ENCODE measurements at regions of chr19 and their contacts with region 1.

Region 1: DNA sequence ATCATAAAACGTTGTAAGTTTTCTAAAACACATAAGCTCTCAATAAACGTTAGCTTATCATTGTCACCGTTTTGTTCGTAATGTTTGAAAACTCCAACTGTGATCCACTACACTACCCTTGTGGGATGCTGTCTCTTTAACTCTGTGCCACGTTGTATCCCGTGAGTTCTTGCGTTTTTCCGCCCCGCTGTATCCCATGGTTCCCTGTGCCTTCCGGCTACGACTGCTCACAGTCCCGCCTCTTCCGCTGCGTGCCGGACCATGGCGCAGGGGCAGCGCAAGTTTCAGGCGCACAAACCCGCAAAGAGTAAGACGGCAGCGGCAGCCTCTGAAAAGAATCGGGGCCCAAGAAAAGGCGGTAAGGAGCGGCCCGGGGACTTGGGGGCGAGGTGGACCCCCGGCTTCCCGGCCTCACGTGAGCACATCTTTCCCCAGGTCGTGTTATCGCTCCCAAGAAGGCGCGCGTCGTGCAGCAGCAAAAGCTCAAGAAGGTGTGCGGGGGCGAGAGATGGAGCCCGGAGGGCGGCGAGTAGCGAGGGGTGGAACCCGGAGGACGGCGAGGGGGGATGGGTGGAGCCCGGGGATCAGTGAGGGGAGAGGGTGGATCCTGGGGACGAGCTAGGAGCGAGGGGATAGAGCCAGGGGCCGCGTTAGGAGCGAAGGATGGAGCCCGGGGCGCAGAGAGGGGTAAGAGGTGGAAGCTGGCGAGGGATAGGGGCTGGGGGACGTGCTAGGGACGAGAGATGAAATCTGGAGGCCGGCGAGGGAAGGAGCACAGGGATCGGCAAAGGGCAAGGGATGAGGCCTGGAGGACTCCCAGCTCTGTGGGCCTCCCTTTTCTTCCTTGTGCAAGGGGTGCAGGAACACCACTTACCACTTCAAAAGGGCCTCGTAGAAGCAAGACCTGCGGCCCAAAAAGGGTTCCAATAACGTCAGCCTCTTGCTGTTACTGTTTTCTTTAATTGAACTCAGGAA is at the start of gene C19orf53:
- DNase-seq: peak; percentile 90
- H3K4me3 ChIP-seq: peak within 1 kb of the TSS; percentile 55 to 91
- H3K27ac ChIP-seq: peak within 1 kb of the TSS; percentile 71 to 84
- H3K4me1 ChIP-seq: peaks cover 9% of the 10 kb centered on the region
- H3K27me3 ChIP-seq: no peaks in the 10 kb centered on the region
- CTCF ChIP-seq: peak in 1 of 4 experiments; percentile 29
- POLR2A ChIP-seq: peak; percentile 90
- total RNA-seq, gene C19orf53: 151 to 193 TPM

Region 2: GRCh38 chr19:13717194-13717643 is 57.3 kb before region 1 on chr19:
- intact Hi-C with region 1: no loop called
- DNase-seq: no peak
- H3K4me3 ChIP-seq: no peak overlapping the region
- H3K27ac ChIP-seq: no peak overlapping the region
- H3K4me1 ChIP-seq: no peaks in the 10 kb centered on the region
- H3K27me3 ChIP-seq: no peaks in the 10 kb centered on the region
- CTCF ChIP-seq: no peak
- POLR2A ChIP-seq: no peak

Region 3: DNA sequence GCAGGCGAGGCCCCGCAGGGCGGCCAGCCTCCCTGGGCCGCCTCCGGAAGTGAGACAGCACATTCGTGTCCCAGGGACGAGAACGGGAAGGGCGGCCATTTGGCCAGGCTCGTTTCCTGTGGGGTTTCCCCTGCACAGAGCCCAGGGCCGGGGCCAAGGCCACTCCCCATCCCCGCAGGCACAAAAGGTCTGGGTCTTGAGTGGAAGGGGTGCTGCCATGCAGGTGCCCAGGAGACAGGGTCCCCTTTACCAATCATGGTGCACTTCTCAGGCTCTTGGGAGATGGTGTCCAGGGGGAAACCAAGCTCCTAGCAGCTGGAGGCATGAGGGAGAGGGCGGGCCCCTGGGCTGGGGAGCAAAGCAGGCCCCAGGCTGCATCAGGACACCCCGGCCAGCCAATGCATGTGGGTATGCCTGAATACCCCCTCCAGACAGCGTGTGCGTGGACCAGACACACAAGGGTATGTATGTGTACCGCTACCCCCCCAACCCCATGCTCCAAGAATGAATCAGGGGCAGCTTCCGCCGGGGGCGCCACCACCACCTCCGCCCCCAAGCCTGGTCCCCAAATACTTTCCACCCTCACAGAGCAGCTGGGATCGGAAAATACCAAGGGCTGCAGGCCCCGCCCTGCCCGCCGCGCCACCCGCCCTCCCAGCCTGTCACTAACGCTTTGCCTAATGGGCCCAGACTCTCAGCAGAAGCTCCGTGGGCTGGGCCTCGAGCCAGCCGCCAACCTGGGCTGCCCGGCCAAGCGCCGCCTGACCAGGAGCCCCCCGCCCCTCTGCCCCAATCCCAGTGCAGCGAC is 64.8 kb after region 1 on chr19:
- intact Hi-C with region 1: no loop called
- DNase-seq: peak; percentile 77
- H3K4me3 ChIP-seq: peak overlapping the region; percentile 91 to 96
- H3K27ac ChIP-seq: peak overlapping the region; percentile 98 to 99
- H3K4me1 ChIP-seq: peaks cover 18% of the 10 kb centered on the region
- H3K27me3 ChIP-seq: no peaks in the 10 kb centered on the region
- CTCF ChIP-seq: peak in 1 of 4 experiments; percentile 6
- POLR2A ChIP-seq: peak; percentile 56

Region 4: GRCh38 chr19:14081325-14082093 is 307.0 kb after region 1 on chr19:
- intact Hi-C with region 1: loop called (anchors 10 kb)
- DNase-seq: peak; percentile 99
- H3K4me3 ChIP-seq: peak overlapping the region; percentile 70 to 88
- H3K27ac ChIP-seq: peak overlapping the region; percentile 87 to 91
- H3K4me1 ChIP-seq: no peaks in the 10 kb centered on the region
- H3K27me3 ChIP-seq: no peaks in the 10 kb centered on the region
- CTCF ChIP-seq: peak in 2 of 4 experiments; percentile 25 to 38
- POLR2A ChIP-seq: peak; percentile 83

Measured in prostate gland (tissue), 2 donors.